CD4-positive, alpha-beta memory T cell (primary cell): ENCODE measurements at regions of chr12 and their contacts with region 1.

Region 1: GRCh38 chr12:22443379-22444316 is 100.7 kb downstream of the C2CD5 start:
- DNase-seq: peak; percentile 67 to 72 (median 68)
- H3K4me3 ChIP-seq: no peak overlapping the region
- H3K4me3 Mint-ChIP-seq: no peak overlapping the region
- H3K27ac ChIP-seq: no peak overlapping the region
- H3K27ac Mint-ChIP-seq: peak overlapping the region in 2 of 7 donors; percentile 14 to 32
- H3K4me1 ChIP-seq: peaks cover 6% of the 10 kb centered on the region
- H3K4me1 Mint-ChIP-seq: peaks cover 8 to 19% (median 13%) of the 10 kb centered on the region in 4 donors
- H3K27me3 ChIP-seq: no peaks in the 10 kb centered on the region
- H3K27me3 Mint-ChIP-seq: no peaks in the 10 kb centered on the region

Region 2: GRCh38 chr12:22083167-22083566 is 360.5 kb before region 1 on chr12:
- CTCF ChIA-PET with region 1: interaction called, 44 read pairs
- POLR2A ChIA-PET with region 1: no interaction called
- intact Hi-C with region 1: loop called (anchors 1 kb)
- DNase-seq: peak; percentile 38 to 55 (median 51)
- H3K4me3 ChIP-seq: no peak overlapping the region
- H3K4me3 Mint-ChIP-seq: no peak overlapping the region
- H3K27ac ChIP-seq: no peak overlapping the region
- H3K27ac Mint-ChIP-seq: no peak overlapping the region
- H3K4me1 ChIP-seq: no peaks in the 10 kb centered on the region
- H3K4me1 Mint-ChIP-seq: no peaks in the 10 kb centered on the region
- H3K27me3 ChIP-seq: no peaks in the 10 kb centered on the region
- H3K27me3 Mint-ChIP-seq: no peaks in the 10 kb centered on the region

Region 3: DNA sequence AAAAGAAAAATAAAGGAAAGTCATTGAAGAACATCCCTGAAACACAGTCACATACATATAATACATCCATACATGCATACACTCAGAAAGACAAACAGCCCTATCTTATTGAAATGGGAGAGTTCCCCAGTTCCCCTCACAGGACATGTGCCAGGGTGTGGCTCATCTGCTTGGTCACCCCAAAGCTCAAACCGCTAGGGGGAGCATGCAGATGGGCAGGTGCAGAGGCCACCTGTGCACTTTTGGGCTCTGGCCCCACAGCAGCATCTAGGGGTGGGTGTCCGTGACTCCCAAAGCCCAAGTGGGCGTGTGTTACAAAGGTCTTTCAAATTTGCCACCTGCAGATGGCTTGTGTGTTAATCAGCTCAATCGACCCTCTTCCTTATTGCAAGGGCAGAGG is 322.4 kb before region 1 on chr12:
- CTCF ChIA-PET with region 1: interaction called, 21 read pairs
- POLR2A ChIA-PET with region 1: no interaction called
- intact Hi-C with region 1: no loop called
- DNase-seq: peak in 4 of 5 donors; percentile 21 to 39 (median 28)
- H3K4me3 ChIP-seq: no peak overlapping the region
- H3K4me3 Mint-ChIP-seq: no peak overlapping the region
- H3K27ac ChIP-seq: no peak overlapping the region
- H3K27ac Mint-ChIP-seq: no peak overlapping the region
- H3K4me1 ChIP-seq: no peaks in the 10 kb centered on the region
- H3K4me1 Mint-ChIP-seq: peaks cover 0 to 6% (median 3%) of the 10 kb centered on the region in 4 donors
- H3K27me3 ChIP-seq: no peaks in the 10 kb centered on the region
- H3K27me3 Mint-ChIP-seq: no peaks in the 10 kb centered on the region

Region 4: DNA sequence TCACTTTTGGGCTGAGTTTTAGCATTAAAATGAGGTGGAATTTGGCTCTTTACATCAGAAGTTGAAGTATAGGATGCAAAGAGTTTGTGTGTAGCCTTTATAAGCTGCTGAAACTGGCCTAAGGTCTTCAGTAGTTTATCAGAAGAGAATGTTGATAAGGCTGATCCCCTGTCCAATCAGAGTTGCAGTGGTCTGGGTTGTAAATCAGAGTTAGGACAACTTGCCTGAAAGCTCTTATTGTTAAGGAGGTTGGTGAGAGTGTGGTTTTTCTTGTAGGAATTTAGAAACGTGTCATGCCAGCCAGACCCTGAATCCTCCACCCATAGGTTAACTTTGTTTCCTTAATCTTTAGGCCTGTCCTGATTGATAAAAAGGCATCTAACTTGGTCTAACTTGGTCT is 252.7 kb before region 1 on chr12:
- CTCF ChIA-PET with region 1: no interaction called
- POLR2A ChIA-PET with region 1: no interaction called
- intact Hi-C with region 1: loop called (anchors 5 kb)
- DNase-seq: no peak
- H3K4me3 ChIP-seq: no peak overlapping the region
- H3K4me3 Mint-ChIP-seq: no peak overlapping the region
- H3K27ac ChIP-seq: no peak overlapping the region
- H3K27ac Mint-ChIP-seq: no peak overlapping the region
- H3K4me1 ChIP-seq: no peaks in the 10 kb centered on the region
- H3K4me1 Mint-ChIP-seq: no peaks in the 10 kb centered on the region
- H3K27me3 ChIP-seq: no peaks in the 10 kb centered on the region
- H3K27me3 Mint-ChIP-seq: no peaks in the 10 kb centered on the region

Region 5: GRCh38 chr12:22275846-22276245 is 167.8 kb before region 1 on chr12:
- CTCF ChIA-PET with region 1: no interaction called
- POLR2A ChIA-PET with region 1: no interaction called
- intact Hi-C with region 1: no loop called
- DNase-seq: no peak
- H3K4me3 ChIP-seq: no peak overlapping the region
- H3K4me3 Mint-ChIP-seq: no peak overlapping the region
- H3K27ac ChIP-seq: no peak overlapping the region
- H3K27ac Mint-ChIP-seq: no peak overlapping the region
- H3K4me1 ChIP-seq: no peaks in the 10 kb centered on the region
- H3K4me1 Mint-ChIP-seq: peaks cover 3 to 10% (median 6%) of the 10 kb centered on the region in 4 donors
- H3K27me3 ChIP-seq: no peaks in the 10 kb centered on the region
- H3K27me3 Mint-ChIP-seq: no peaks in the 10 kb centered on the region

Region 6: GRCh38 chr12:22409377-22410164 is 34.1 kb before region 1 on chr12:
- CTCF ChIA-PET with region 1: interaction called, 4 read pairs
- POLR2A ChIA-PET with region 1: interaction called, 12 read pairs
- intact Hi-C with region 1: loop called (anchors 2 kb)
- DNase-seq: peak; percentile 73 to 82 (median 75)
- H3K4me3 ChIP-seq: peak overlapping the region in 1 of 2 donors; percentile 51
- H3K4me3 Mint-ChIP-seq: peak overlapping the region; percentile 75 to 92 (median 86)
- H3K27ac ChIP-seq: peak overlapping the region; percentile 62
- H3K27ac Mint-ChIP-seq: peak overlapping the region; percentile 92 to 96 (median 94)
- H3K4me1 ChIP-seq: peaks cover 58% of the 10 kb centered on the region
- H3K4me1 Mint-ChIP-seq: peaks cover 27 to 47% (median 40%) of the 10 kb centered on the region in 4 donors
- H3K27me3 ChIP-seq: no peaks in the 10 kb centered on the region
- H3K27me3 Mint-ChIP-seq: no peaks in the 10 kb centered on the region